OCI-LY7 (cell line): ENCODE measurements at regions of chr2 and their contacts with region 1.

Region 1: GRCh38 chr2:54052825-54053718 is 62.3 kb upstream of the ACYP2 start:
- DNase-seq: peak; percentile 33
- H3K4me3 ChIP-seq: no peak overlapping the region
- H3K27ac ChIP-seq: peak overlapping the region; percentile 36
- H3K4me1 ChIP-seq: peaks cover 20% of the 10 kb centered on the region
- CTCF ChIP-seq: peak; percentile 65

Region 2: GRCh38 chr2:54073797-54074196 is 20.7 kb after region 1 on chr2:
- CTCF ChIA-PET with region 1: no interaction called
- POLR2A ChIA-PET with region 1: interaction called, 13 read pairs
- intact Hi-C with region 1: no loop called
- DNase-seq: no peak
- H3K4me3 ChIP-seq: no peak overlapping the region
- H3K27ac ChIP-seq: no peak overlapping the region
- H3K4me1 ChIP-seq: no peaks in the 10 kb centered on the region
- CTCF ChIP-seq: no peak

Region 3: GRCh38 chr2:54133056-54133455 is 80.0 kb after region 1 on chr2:
- CTCF ChIA-PET with region 1: no interaction called
- POLR2A ChIA-PET with region 1: no interaction called
- intact Hi-C with region 1: no loop called
- DNase-seq: no peak
- H3K4me3 ChIP-seq: no peak overlapping the region
- H3K27ac ChIP-seq: no peak overlapping the region
- H3K4me1 ChIP-seq: no peaks in the 10 kb centered on the region
- CTCF ChIP-seq: no peak

Region 4: GRCh38 chr2:54348646-54349045 is 295.6 kb after region 1 on chr2:
- CTCF ChIA-PET with region 1: no interaction called
- POLR2A ChIA-PET with region 1: no interaction called
- intact Hi-C with region 1: no loop called
- DNase-seq: no peak
- H3K4me3 ChIP-seq: no peak overlapping the region
- H3K27ac ChIP-seq: no peak overlapping the region
- H3K4me1 ChIP-seq: no peaks in the 10 kb centered on the region
- CTCF ChIP-seq: no peak

Region 5: GRCh38 chr2:55204950-55205349 is 1151.9 kb after region 1 on chr2:
- CTCF ChIA-PET with region 1: no interaction called
- POLR2A ChIA-PET with region 1: no interaction called
- intact Hi-C with region 1: no loop called
- DNase-seq: no peak
- H3K4me3 ChIP-seq: no peak overlapping the region
- H3K27ac ChIP-seq: no peak overlapping the region
- H3K4me1 ChIP-seq: no peaks in the 10 kb centered on the region
- CTCF ChIP-seq: no peak